Calu3 (cell line): ENCODE measurements at regions of chr12 and their contacts with region 1.

Region 1: GRCh38 chr12:25769076-25769945 is 189.2 kb upstream of the RASSF8 start:
- DNase-seq: no peak
- H3K4me3 Mint-ChIP-seq: no peak overlapping the region
- H3K27ac Mint-ChIP-seq: no peak overlapping the region
- H3K4me1 Mint-ChIP-seq: peaks cover 19% of the 10 kb centered on the region
- H3K27me3 Mint-ChIP-seq: no peaks in the 10 kb centered on the region
- CTCF ChIP-seq: no peak

Region 2: GRCh38 chr12:25156061-25156460 is 613.2 kb before region 1 on chr12:
- CTCF ChIA-PET with region 1: no interaction called
- intact Hi-C with region 1: no loop called
- DNase-seq: no peak
- H3K4me3 Mint-ChIP-seq: no peak overlapping the region
- H3K27ac Mint-ChIP-seq: no peak overlapping the region
- H3K4me1 Mint-ChIP-seq: no peaks in the 10 kb centered on the region
- H3K27me3 Mint-ChIP-seq: no peaks in the 10 kb centered on the region
- CTCF ChIP-seq: no peak

Region 3: GRCh38 chr12:25458047-25458552 is 311.2 kb before region 1 on chr12:
- CTCF ChIA-PET with region 1: interaction called, 10 read pairs
- intact Hi-C with region 1: no loop called
- DNase-seq: peak; percentile 44
- H3K4me3 Mint-ChIP-seq: peak overlapping the region; percentile 39
- H3K27ac Mint-ChIP-seq: no peak overlapping the region
- H3K4me1 Mint-ChIP-seq: no peaks in the 10 kb centered on the region
- H3K27me3 Mint-ChIP-seq: no peaks in the 10 kb centered on the region
- CTCF ChIP-seq: no peak

Region 4: DNA sequence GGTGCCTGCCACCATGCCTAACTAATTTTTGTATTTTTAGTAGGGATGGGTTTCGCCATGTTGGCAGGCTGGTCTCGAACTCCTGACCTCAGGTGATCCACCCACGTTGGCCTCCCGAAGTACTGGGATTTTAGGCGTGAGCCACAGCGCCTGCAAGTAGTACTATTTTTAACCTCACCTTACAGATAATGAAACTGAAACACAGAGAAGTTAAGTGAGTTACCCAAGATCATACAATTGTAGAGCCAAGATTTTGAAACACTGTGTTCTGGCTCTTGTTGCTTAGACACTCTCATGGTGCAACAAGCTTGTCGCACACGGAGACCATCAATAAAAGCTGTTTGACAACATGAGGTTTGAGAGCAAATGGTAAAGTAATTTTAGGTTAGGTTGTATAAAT is 57.1 kb before region 1 on chr12:
- CTCF ChIA-PET with region 1: no interaction called
- intact Hi-C with region 1: no loop called
- DNase-seq: no peak
- H3K4me3 Mint-ChIP-seq: no peak overlapping the region
- H3K27ac Mint-ChIP-seq: no peak overlapping the region
- H3K4me1 Mint-ChIP-seq: no peaks in the 10 kb centered on the region
- H3K27me3 Mint-ChIP-seq: no peaks in the 10 kb centered on the region
- CTCF ChIP-seq: no peak

Region 5: DNA sequence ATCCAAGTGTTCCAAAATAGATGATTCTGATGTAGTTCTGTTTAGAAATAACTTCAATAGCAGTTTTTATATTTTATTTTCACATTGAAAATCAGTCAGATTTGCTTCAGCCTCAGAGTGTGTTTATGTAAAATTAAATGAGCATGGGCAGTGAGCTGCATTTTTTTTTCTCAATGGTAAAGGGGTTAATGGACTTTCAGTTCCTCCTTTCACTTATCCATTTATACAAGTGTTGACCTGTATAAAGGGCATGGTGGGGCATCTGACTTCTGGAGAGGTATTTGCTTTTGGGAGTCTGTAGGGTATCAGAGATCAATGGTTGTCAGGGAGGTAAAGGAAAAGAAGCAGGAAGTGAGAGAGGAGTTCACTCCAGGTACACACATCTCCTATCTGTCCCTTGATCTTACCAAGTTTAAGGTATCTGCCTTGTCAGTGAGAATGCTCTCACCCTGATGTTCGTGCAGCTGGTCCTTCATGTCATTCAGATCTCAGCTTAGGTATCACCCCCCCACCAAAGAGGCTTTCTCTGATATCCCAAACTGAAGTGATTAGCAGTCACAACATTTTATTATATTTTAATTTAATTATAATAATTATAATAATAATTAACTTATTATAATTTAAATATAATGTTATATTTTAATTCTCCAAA is 34.7 kb before region 1 on chr12:
- CTCF ChIA-PET with region 1: no interaction called
- intact Hi-C with region 1: no loop called
- DNase-seq: no peak
- H3K4me3 Mint-ChIP-seq: no peak overlapping the region
- H3K27ac Mint-ChIP-seq: no peak overlapping the region
- H3K4me1 Mint-ChIP-seq: peaks cover 18% of the 10 kb centered on the region
- H3K27me3 Mint-ChIP-seq: no peaks in the 10 kb centered on the region
- CTCF ChIP-seq: no peak

Region 6: DNA sequence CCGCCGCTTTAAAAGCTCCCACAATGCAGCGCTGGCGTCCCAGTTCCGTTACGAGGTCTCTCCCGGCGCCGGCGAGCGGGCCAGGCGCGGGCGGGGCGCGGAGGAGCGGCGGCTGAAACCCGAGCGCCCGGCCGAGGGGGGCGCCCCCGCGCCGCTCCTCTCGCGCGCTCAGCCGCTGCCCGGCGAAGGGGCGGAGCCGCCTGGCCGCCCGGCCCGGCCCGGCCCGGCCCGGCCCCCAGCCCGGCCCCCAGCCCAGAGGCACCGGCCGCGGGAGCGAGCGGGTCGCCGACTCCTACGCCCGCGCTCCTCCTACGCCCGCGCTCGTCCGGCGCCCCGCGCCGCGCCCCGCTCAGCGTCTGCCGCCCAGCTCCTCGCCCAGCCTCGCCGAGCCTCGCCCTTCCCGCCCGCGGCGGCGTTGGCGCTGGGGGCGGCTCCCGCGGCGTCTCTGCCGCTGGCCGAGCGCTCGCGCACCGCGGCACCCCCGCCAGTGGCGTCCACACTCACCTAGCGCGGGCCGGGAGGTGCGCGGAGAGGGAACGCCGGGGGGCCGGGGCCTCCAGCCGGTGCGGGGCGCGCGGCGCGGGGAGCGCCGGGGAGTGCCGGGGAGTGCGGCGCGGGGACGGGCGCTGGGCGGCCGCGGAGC is 189.2 kb after region 1 on chr12 and contains the start of gene RASSF8:
- CTCF ChIA-PET with region 1: no interaction called
- intact Hi-C with region 1: no loop called
- DNase-seq: peak; percentile 80
- H3K4me3 Mint-ChIP-seq: peak within 1 kb of the TSS; percentile 82
- H3K27ac Mint-ChIP-seq: peak within 1 kb of the TSS; percentile 56
- H3K4me1 Mint-ChIP-seq: peaks cover 25% of the 10 kb centered on the region
- H3K27me3 Mint-ChIP-seq: no peaks in the 10 kb centered on the region
- CTCF ChIP-seq: no peak
- total RNA-seq, gene RASSF8: 17.4 and 26.6 TPM in 2 replicates